ENCODE measurements at regions of chr6 and their contacts with region 1.

Region 1: GRCh38 chr6:31862344-31863227 is at the start of gene NEU1:
- DNase-seq: peak; percentile 100
- H3K4me3 Mint-ChIP-seq: peak within 1 kb of the TSS; percentile 90
- H3K27ac Mint-ChIP-seq: peak within 1 kb of the TSS; percentile 73
- H3K4me1 Mint-ChIP-seq: peaks cover 11% of the 10 kb centered on the region
- H3K27me3 Mint-ChIP-seq: no peaks in the 10 kb centered on the region
- total RNA-seq, gene NEU1: 8.4 to 9.2 TPM

Region 2: DNA sequence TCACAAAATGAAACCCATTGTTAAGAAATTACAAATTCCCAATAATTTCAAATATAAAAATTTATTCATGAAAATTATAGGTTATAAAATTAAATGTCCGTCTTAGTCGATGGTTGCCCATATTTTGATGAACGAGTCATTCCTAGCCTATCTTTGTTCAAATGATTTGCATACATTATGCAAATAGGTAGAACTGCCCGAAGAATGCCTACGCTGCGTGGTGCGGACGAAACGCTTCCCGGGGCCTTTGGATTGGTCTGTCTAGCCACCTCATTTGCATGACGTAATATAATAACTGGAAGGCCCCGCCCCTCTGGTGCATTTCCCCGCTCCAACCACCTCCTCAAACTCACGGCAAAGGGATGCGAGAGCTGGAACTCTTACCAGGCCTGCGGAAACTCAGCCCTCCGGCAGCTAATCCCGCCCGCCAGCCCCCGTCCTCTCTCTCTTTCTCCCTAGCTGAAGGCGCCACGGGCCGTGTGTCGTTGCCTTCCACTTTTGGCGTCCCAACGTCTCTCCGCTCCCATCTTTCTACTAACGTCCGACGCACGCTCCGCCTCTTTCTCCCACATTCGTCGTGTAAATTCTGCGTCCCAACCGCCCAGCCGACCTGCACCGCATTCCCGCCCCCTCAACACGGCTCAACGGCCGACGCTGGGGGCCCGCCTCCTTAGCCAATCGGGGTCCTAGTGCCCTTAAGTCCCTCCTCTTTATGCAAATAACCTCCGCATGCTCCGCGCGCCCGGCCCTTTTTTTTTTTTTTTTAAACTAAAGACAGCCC is 242.6 kb before region 1 on chr6:
- CTCF ChIA-PET with region 1: no interaction called
- intact Hi-C with region 1: loop called (anchors 1 kb)
- DNase-seq: peak; percentile 99
- H3K4me3 Mint-ChIP-seq: peak overlapping the region; percentile 83
- H3K27ac Mint-ChIP-seq: peak overlapping the region; percentile 97
- H3K4me1 Mint-ChIP-seq: peaks cover 55% of the 10 kb centered on the region
- H3K27me3 Mint-ChIP-seq: no peaks in the 10 kb centered on the region

Region 3: GRCh38 chr6:31680840-31681671 is 181.5 kb before region 1 on chr6 and contains the start of gene LY6G5C:
- CTCF ChIA-PET with region 1: interaction called, 6 read pairs
- intact Hi-C with region 1: loop called (anchors 2 kb)
- DNase-seq: peak; percentile 85
- H3K4me3 Mint-ChIP-seq: peak within 1 kb of the TSS; percentile 74
- H3K27ac Mint-ChIP-seq: no peak within 1 kb of the TSS
- H3K4me1 Mint-ChIP-seq: peaks cover 11% of the 10 kb centered on the region
- H3K27me3 Mint-ChIP-seq: no peaks in the 10 kb centered on the region
- total RNA-seq, gene LY6G5C: 0.93 to 1.4 TPM

Region 4: GRCh38 chr6:31776989-31777666 is 85.5 kb before region 1 on chr6 and contains the start of gene VWA7:
- CTCF ChIA-PET with region 1: no interaction called
- intact Hi-C with region 1: loop called (anchors 1 kb)
- DNase-seq: peak; percentile 80
- H3K4me3 Mint-ChIP-seq: no peak within 1 kb of the TSS
- H3K27ac Mint-ChIP-seq: peak within 1 kb of the TSS; percentile 63
- H3K4me1 Mint-ChIP-seq: peaks cover 35% of the 10 kb centered on the region
- H3K27me3 Mint-ChIP-seq: no peaks in the 10 kb centered on the region
- total RNA-seq, gene VWA7: 0.69 to 0.89 TPM

Region 5: DNA sequence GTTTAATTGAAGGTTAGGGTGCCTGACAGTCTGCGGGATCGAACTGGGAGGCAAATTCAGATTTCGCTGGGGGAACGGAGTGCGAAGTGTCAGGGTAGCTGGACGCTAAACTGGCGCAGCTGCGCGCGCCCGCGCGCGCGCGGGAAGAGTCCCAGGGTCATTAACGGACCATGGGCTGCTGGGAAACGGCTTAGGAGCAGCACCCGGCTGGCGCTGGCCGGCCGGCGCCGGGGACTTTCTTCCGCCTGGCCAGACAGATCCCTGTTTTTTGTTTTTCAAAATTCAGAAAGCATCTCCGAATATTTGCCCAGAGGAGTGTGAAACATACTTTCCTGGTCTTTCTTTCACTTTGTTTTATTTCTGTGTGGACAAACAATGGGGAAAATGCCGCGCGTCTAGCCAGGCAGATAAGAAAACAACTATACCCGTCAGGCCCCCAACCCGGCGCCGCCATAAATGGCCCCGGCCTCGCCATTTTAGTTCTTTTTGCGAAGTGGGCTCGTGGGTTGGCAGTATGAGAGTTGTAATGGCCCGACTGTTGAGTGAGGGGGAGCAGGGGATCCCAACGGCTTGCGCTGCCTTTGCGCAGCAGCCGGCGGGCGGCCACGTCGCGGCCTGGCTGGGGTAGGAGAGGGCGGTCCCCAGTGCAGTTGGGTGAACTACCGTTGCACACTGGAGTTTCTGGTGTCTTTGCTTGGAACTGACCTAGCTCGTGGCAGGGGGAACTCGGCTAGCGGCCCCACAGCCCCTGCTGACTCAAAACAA is 28.0 kb before region 1 on chr6:
- CTCF ChIA-PET with region 1: interaction called, 7 read pairs
- intact Hi-C with region 1: loop called (anchors 1 kb)
- DNase-seq: peak; percentile 80
- H3K4me3 Mint-ChIP-seq: peak overlapping the region; percentile 94
- H3K27ac Mint-ChIP-seq: peak overlapping the region; percentile 98
- H3K4me1 Mint-ChIP-seq: peaks cover 46% of the 10 kb centered on the region
- H3K27me3 Mint-ChIP-seq: no peaks in the 10 kb centered on the region

Region 6: GRCh38 chr6:31958741-31959739 is 96.5 kb after region 1 on chr6 and contains the starts of genes NELFE and SKIC2:
- CTCF ChIA-PET with region 1: no interaction called
- intact Hi-C with region 1: loop called (anchors 1 kb)
- DNase-seq: peak; percentile 99
- H3K4me3 Mint-ChIP-seq: peak within 1 kb of the TSS; percentile 95
- H3K27ac Mint-ChIP-seq: peak within 1 kb of the TSS; percentile 94
- H3K4me1 Mint-ChIP-seq: peaks cover 41% of the 10 kb centered on the region
- H3K27me3 Mint-ChIP-seq: no peaks in the 10 kb centered on the region
- total RNA-seq, gene NELFE: 83.2 to 87.4 TPM
- total RNA-seq, gene SKIC2: 93.6 to 101 TPM

Measured in activated naive CD4-positive, alpha-beta T cell treated with anti-CD3 and anti-CD28 coated beads for 36 hours (primary cell).